ENCODE measurements at regions of chr7 and their contacts with region 1.

Region 1: GRCh38 chr7:88111136-88111743 is 108.6 kb downstream of the SRI start:
- DNase-seq: peak; percentile 26
- CTCF ChIP-seq: peak; percentile 48

Region 2: GRCh38 chr7:87312215-87312865 is 798.9 kb before region 1 on chr7:
- in situ Hi-C with region 1: loop called (anchors 25 kb)
- DNase-seq: peak; percentile 58
- CTCF ChIP-seq: peak; percentile 97

Region 3: DNA sequence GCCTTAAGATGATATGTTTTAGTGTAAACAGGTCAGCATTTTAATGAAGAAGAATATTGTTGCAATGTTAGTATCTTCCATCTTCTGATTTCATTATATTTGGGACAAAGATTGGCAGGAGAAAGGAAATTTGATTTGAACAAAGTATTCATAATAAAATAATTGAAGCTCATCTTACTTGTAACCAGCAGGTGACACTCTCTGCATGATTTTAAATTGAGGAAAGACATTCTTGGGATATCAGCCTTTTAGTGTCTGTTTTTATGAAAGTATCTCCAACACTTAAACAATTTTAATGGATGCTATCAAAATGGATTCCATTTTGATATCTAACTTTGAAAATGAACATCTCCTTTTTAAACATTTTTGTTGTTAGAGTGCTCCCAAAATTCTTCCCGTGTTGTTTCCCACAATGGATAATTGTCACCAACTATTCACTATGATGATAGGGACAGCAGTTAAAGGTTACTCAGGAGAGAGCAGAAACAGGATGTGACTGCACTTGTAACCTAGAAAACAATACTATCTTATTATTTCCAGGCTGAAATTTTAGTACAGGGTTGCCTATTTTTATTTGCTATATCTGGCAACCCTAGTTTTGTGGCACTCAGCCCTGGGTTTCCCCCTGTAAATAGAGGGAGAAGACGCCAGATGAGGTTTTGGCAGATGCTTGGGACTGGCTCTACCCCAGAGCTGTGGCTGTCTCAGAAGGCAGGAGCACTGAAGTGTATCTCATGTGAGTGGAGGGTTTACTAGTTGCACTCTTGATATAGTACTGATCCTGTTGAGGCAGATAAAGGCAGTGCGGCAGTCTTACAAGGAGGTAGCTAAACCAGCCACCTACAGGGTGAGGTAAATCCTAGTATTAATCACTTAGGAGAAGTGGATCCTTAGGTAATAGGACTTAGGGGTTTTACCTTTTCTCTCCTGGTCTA is 604.7 kb before region 1 on chr7:
- in situ Hi-C with region 1: loop called (anchors 25 kb)
- DNase-seq: no peak
- CTCF ChIP-seq: peak; percentile 51

Region 4: DNA sequence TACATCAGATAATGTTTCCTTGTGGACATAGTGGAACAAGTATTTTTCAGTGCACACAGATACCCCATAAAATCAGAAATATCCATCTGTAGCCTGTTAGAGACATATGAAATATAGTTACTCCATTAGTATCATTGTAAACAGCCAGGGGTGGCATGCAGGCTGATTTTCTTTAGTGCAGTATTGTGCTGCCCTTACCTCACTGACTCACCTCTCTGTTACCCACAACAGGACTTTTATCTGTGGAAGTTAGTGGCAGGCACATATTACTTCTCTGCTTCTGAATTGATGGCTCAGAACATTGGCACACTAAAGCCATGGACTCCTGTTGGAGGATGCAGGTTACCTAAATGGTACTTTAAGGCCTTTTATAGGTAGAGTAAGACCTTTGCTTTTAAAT is 305.1 kb before region 1 on chr7:
- in situ Hi-C with region 1: loop called (anchors 10 kb)
- DNase-seq: no peak
- CTCF ChIP-seq: no peak

Region 5: GRCh38 chr7:87876040-87876868 is 235.0 kb before region 1 on chr7 and contains the starts of genes DBF4 and SLC25A40:
- in situ Hi-C with region 1: loop called (anchors 25 kb)
- DNase-seq: peak; percentile 96
- CTCF ChIP-seq: no peak

Measured in GM13977 (cell line).